AG04450 (cell line): ENCODE measurements at regions of chr6 and their contacts with region 1.

Region 1: DNA sequence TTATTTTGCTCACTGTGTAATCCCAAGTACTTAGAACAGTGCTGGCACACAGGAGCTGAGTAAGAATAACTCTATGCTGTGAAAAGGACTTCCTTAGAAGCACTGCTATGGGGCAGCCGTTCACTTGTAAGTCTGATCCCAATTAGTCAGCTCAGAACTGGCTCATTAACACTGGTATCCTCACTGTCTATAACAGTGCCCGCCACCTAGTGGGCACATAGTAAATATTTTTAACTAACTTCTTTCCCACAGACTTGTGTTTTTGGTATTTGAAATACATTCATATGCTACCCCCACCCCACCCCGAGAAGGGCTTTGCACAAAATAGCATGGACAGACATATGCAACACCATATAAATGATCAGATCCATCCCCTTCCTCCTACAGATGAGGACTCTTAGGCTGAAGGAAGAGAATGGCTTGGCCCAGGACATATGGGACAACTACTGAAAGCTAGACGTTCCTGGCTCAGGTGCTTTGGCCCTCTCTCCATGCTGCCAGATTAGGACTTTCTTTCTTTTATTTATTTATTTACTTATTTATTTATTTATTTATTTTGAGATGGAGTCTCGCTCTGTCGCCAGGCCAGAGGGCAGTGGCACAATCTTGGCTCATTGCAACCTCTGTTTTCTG is 47.1 kb downstream of the DST start:
- DNase-seq: no peak
- H3K4me3 ChIP-seq: no peak overlapping the region
- H3K27ac ChIP-seq: no peak overlapping the region
- H3K27me3 ChIP-seq: no peaks in the 10 kb centered on the region
- CTCF ChIP-seq: peak; percentile 60

Region 2: DNA sequence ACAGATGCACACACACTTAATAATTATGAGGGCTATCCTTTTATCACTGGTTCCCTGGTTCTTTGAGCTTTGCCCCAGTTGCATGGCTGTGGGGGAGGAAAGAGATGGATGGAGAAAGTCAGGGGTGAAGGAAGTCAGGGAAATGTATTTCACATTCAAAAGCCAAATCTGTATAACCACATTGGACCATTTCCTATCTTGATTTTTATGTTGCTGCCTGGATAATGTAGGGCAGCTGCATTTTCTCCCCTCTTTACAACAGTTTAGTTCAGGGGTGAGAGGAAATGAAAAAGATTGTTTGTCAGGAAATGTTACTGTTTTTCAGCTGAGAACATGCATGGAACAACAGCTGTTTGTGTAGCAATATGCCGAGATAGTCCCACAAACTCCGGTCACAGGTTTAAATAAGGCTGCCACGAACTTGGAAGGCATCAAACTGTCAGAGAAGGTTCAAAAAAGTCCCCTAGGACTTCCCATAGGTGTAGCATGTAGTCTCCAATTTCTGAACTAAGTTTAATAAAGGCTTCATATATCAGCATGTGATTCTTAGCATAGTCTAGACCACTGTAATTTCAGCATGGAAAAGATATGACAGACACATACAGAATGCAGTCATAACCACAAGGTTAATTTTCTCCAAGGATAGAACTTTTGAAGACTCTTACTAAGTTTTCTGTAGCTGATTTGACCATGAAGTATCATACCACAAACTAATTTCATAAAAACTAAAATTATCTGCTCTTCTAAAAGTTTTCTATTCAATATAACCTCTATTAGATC is 266.1 kb before region 1 on chr6:
- CTCF ChIA-PET with region 1: interaction called, 14 read pairs
- POLR2A ChIA-PET with region 1: no interaction called
- DNase-seq: no peak
- H3K4me3 ChIP-seq: no peak overlapping the region
- H3K27ac ChIP-seq: peak overlapping the region; percentile 41
- H3K27me3 ChIP-seq: no peaks in the 10 kb centered on the region
- CTCF ChIP-seq: no peak

Region 3: GRCh38 chr6:56364827-56365313 is 230.7 kb before region 1 on chr6:
- CTCF ChIA-PET with region 1: interaction called, 51 read pairs
- POLR2A ChIA-PET with region 1: no interaction called
- DNase-seq: no peak
- H3K4me3 ChIP-seq: no peak overlapping the region
- H3K27ac ChIP-seq: no peak overlapping the region
- H3K27me3 ChIP-seq: no peaks in the 10 kb centered on the region
- CTCF ChIP-seq: no peak

Region 4: DNA sequence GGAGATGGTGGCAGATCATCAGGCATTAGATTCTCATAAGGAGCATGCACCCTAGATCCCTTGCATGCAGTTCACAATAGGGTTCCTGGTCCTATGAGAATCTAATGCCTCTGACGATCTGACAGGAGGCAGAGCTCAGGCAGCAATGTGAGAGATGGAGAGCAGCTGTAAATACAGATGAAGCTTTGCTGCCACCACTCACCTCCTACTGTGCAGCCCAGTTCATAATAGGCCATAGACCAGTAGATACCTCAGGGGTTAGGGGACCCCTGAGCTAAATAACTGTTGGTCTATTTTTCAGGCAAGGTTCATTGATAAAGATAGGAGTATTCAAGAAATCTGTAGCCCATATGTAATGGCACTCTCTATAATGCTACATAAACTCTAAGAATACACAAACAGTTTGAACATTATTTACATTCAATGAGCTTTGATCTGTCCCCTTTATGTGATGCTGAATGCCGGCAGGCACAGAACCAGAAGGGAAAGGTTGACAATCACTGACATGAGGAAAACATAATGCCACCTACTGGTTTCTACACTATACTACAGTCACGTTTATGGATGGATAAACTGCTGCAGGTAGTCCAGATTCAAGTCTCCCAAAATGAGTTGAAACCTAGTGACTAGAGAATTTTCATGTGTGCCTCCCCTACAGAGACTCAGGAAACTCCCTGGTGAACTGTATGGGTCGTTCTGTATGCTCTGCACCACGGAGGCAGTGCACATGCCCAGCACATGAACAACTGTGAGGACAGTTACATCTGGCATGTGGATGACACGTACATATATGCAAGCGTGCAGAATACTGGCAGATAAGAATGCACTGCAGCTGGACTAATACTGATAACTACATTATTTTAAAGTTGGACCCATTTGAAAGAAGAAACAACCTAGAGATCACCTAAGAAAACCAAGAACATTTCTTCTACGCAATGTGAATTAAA is 24.9 kb before region 1 on chr6:
- CTCF ChIA-PET with region 1: interaction called, 29 read pairs
- POLR2A ChIA-PET with region 1: interaction called, 3 read pairs
- DNase-seq: no peak
- H3K4me3 ChIP-seq: no peak overlapping the region
- H3K27ac ChIP-seq: no peak overlapping the region
- H3K27me3 ChIP-seq: no peaks in the 10 kb centered on the region
- CTCF ChIP-seq: peak; percentile 57

Region 5: DNA sequence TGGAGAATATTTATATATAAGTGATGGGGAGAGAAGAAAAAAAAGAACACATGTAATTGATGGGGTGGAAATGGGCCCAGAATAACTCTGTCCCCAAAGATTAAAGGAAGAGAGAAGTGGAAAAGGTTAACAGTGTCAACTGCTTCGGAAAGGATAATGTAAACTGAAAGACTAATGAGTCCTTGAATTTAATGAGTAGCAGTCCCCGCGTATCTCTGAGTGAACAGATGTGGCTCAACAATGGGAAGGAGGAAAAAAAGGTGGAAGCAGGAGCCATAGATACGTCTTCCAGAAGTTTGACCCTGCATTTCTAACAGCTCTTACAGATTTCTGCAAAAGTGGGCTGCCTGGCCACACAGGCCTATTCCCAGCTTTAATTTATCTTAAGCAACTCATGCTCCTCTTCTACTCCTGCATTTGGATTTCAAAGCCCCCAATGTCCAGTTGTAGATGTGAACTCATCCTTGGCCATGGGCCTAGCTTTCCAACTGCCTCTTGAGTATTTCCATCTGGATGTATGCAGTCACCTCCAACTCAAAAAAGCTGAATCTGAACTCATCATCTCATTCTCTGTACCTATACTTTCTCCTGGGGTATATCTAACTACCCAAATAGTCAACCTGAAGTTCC is 14.2 kb before region 1 on chr6:
- CTCF ChIA-PET with region 1: interaction called, 29 read pairs
- POLR2A ChIA-PET with region 1: no interaction called
- DNase-seq: peak; percentile 24
- H3K4me3 ChIP-seq: no peak overlapping the region
- H3K27ac ChIP-seq: no peak overlapping the region
- H3K27me3 ChIP-seq: no peaks in the 10 kb centered on the region
- CTCF ChIP-seq: no peak